ENCODE measurements at regions of chr11 and their contacts with region 1.

Region 1: GRCh38 chr11:104934594-104934993 is 33.8 kb downstream of the CASP4 start:
- DNase-seq: peak; percentile 33
- ATAC-seq: peak; percentile 86
- H3K4me3 Mint-ChIP-seq: peak overlapping the region; percentile 47
- H3K27ac Mint-ChIP-seq: peak overlapping the region; percentile 76
- H3K4me1 Mint-ChIP-seq: peaks cover 35% of the 10 kb centered on the region
- H3K27me3 Mint-ChIP-seq: no peaks in the 10 kb centered on the region

Region 2: DNA sequence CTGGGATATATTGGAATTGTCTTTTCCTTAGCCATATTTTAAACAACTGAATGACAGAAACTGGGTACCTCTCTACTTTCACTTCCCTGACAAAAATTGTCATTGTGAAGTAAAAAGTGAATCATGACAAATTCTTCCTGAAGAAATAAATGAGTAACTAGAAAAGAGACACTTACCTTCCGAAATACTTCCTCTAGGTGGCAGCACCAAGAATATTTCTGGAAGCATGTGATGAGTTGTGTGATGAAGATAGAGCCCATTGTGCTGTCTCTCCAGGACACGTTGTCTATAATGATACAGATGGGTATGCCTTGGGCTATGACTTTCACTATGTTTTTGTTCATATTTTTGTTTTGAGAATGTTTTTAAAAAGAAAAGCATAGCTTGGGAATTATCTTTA is 12.3 kb after region 1 on chr11:
- CTCF ChIA-PET with region 1: interaction called, 14 read pairs
- POLR2A ChIA-PET with region 1: no interaction called
- DNase-seq: peak; percentile 54
- ATAC-seq: peak; percentile 68
- H3K4me3 Mint-ChIP-seq: no peak overlapping the region
- H3K27ac Mint-ChIP-seq: no peak overlapping the region
- H3K4me1 Mint-ChIP-seq: peaks cover 13% of the 10 kb centered on the region
- H3K27me3 Mint-ChIP-seq: no peaks in the 10 kb centered on the region

Region 3: GRCh38 chr11:104984808-104985207 is 50.2 kb after region 1 on chr11:
- CTCF ChIA-PET with region 1: no interaction called
- POLR2A ChIA-PET with region 1: no interaction called
- DNase-seq: no peak
- ATAC-seq: no peak
- H3K4me3 Mint-ChIP-seq: no peak overlapping the region
- H3K27ac Mint-ChIP-seq: no peak overlapping the region
- H3K4me1 Mint-ChIP-seq: no peaks in the 10 kb centered on the region
- H3K27me3 Mint-ChIP-seq: no peaks in the 10 kb centered on the region